ENCODE measurements at regions of chr7 and their contacts with region 1.

Region 1: GRCh38 chr7:131164025-131164899 is 163.4 kb upstream of the MKLN1 start:
- DNase-seq: peak; percentile 69
- ATAC-seq: peak; percentile 82
- H3K4me3 ChIP-seq: peak overlapping the region; percentile 6 to 47
- H3K27ac ChIP-seq: peak overlapping the region; percentile 65
- H3K4me1 ChIP-seq: peaks cover 10 to 39% of the 10 kb centered on the region in 2 experiments
- H3K27me3 ChIP-seq: no peaks in the 10 kb centered on the region
- CTCF ChIP-seq: no peak
- POLR2A ChIP-seq: no peak
- RAD21 ChIP-seq: peak; percentile 28; the same call in 1 of the 2 replicates

Region 2: GRCh38 chr7:131107337-131108211 is 56.7 kb before region 1 on chr7:
- CTCF ChIA-PET with region 1: no interaction called
- POLR2A ChIA-PET with region 1: interaction called, 9 read pairs
- RAD21 ChIA-PET with region 1: interaction called in 1 of 2 experiments, 3 read pairs
- intact Hi-C with region 1: loop called (anchors 2 kb)
- DNase-seq: peak; percentile 44
- ATAC-seq: peak; percentile 33
- H3K4me3 ChIP-seq: peak overlapping the region; percentile 80 to 88
- H3K27ac ChIP-seq: peak overlapping the region; percentile 87
- H3K4me1 ChIP-seq: peaks cover 26 to 47% of the 10 kb centered on the region in 2 experiments
- H3K27me3 ChIP-seq: no peaks in the 10 kb centered on the region
- CTCF ChIP-seq: no peak
- POLR2A ChIP-seq: no peak
- RAD21 ChIP-seq: no peak

Measured in HCT116 (cell line).